ENCODE measurements at regions of chr15 and their contacts with region 1.

Region 1: DNA sequence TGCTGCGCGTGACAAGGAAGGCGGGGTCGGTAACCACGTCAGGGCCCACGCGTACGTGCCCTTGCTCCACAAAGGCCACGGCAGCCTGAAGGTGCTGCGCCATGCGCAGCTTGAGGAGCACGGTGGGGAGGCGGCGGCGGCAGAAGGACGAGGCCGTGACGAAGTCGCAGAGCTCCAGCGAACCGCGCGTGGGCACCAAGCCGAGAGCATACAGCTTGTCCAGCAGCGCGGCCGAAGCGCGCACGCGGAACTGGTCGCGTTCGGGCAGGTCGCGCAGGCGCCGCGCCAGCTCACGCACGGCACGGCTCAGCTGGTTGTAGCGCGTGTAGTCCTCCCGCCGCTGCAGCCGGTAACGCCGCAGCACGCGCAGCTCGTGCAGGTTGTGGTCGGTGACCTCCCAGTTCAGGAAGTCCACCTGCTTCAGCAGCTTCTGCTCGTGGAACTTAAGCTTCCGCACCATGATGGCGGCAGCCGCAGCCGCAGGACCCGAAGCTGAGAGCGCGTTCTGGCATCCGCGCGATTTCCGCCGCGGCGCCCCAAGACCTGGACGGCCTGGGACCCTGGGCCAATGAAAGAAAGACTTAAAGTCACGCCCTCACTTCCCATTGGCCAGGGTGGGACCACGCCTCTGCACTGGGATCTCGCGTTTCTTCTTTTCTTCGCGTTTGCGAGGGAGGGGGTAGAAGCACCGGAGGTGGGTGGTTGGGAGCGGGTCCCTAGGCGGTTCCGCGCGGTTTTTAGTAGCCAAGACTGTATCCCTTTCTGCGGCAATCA is at the start of gene IMP3:
- DNase-seq: peak; percentile 97
- H3K4me3 ChIP-seq: peak within 1 kb of the TSS; percentile 62 to 89
- H3K27ac ChIP-seq: peak within 1 kb of the TSS; percentile 82 to 88
- H3K4me1 ChIP-seq: peaks cover 12% of the 10 kb centered on the region
- H3K27me3 ChIP-seq: no peaks in the 10 kb centered on the region
- CTCF ChIP-seq: no peak
- POLR2A ChIP-seq: peak; percentile 99
- total RNA-seq, gene IMP3: 125 to 277 TPM

Region 2: GRCh38 chr15:75367913-75368688 is 271.8 kb before region 1 on chr15 and contains the start of gene MAN2C1:
- intact Hi-C with region 1: loop called (anchors 5 kb)
- DNase-seq: peak; percentile 97
- H3K4me3 ChIP-seq: peak within 1 kb of the TSS; percentile 74 to 83
- H3K27ac ChIP-seq: peak within 1 kb of the TSS; percentile 94 to 95
- H3K4me1 ChIP-seq: peaks cover 4% of the 10 kb centered on the region
- H3K27me3 ChIP-seq: no peaks in the 10 kb centered on the region
- CTCF ChIP-seq: peak; percentile 74 to 93 (median 91)
- POLR2A ChIP-seq: peak; percentile 87
- total RNA-seq, gene MAN2C1: 184 to 238 TPM

Region 3: GRCh38 chr15:75620841-75621391 is 19.0 kb before region 1 on chr15:
- intact Hi-C with region 1: no loop called
- DNase-seq: peak; percentile 31
- H3K4me3 ChIP-seq: no peak overlapping the region
- H3K27ac ChIP-seq: peak overlapping the region; percentile 23 to 66
- H3K4me1 ChIP-seq: no peaks in the 10 kb centered on the region
- H3K27me3 ChIP-seq: no peaks in the 10 kb centered on the region
- CTCF ChIP-seq: peak in 1 of 4 experiments; percentile 24
- POLR2A ChIP-seq: no peak

Region 4: GRCh38 chr15:75672646-75673425 is 32.9 kb after region 1 on chr15:
- intact Hi-C with region 1: loop called (anchors 5 kb)
- DNase-seq: no peak
- H3K4me3 ChIP-seq: no peak overlapping the region
- H3K27ac ChIP-seq: peak overlapping the region; percentile 51 to 60
- H3K4me1 ChIP-seq: peaks cover 6% of the 10 kb centered on the region
- H3K27me3 ChIP-seq: no peaks in the 10 kb centered on the region
- CTCF ChIP-seq: no peak
- POLR2A ChIP-seq: no peak

Region 5: GRCh38 chr15:75738647-75739331 is 98.9 kb after region 1 on chr15:
- intact Hi-C with region 1: loop called (anchors 5 kb)
- DNase-seq: peak; percentile 94
- H3K4me3 ChIP-seq: peak overlapping the region; percentile 73
- H3K27ac ChIP-seq: peak overlapping the region; percentile 69 to 72
- H3K4me1 ChIP-seq: no peaks in the 10 kb centered on the region
- H3K27me3 ChIP-seq: no peaks in the 10 kb centered on the region
- CTCF ChIP-seq: no peak
- POLR2A ChIP-seq: no peak

Region 6: GRCh38 chr15:75801859-75802593 is 162.1 kb after region 1 on chr15:
- intact Hi-C with region 1: loop called (anchors 5 kb)
- DNase-seq: peak; percentile 61
- H3K4me3 ChIP-seq: no peak overlapping the region
- H3K27ac ChIP-seq: no peak overlapping the region
- H3K4me1 ChIP-seq: peaks cover 2% of the 10 kb centered on the region
- H3K27me3 ChIP-seq: peaks cover 2% of the 10 kb centered on the region
- CTCF ChIP-seq: peak; percentile 80 to 85 (median 83)
- POLR2A ChIP-seq: no peak

Measured in prostate gland (tissue), 2 donors.